Gastrocnemius medialis (tissue), 4 donors: ENCODE measurements at regions of chr5 and their contacts with region 1.

Region 1: DNA sequence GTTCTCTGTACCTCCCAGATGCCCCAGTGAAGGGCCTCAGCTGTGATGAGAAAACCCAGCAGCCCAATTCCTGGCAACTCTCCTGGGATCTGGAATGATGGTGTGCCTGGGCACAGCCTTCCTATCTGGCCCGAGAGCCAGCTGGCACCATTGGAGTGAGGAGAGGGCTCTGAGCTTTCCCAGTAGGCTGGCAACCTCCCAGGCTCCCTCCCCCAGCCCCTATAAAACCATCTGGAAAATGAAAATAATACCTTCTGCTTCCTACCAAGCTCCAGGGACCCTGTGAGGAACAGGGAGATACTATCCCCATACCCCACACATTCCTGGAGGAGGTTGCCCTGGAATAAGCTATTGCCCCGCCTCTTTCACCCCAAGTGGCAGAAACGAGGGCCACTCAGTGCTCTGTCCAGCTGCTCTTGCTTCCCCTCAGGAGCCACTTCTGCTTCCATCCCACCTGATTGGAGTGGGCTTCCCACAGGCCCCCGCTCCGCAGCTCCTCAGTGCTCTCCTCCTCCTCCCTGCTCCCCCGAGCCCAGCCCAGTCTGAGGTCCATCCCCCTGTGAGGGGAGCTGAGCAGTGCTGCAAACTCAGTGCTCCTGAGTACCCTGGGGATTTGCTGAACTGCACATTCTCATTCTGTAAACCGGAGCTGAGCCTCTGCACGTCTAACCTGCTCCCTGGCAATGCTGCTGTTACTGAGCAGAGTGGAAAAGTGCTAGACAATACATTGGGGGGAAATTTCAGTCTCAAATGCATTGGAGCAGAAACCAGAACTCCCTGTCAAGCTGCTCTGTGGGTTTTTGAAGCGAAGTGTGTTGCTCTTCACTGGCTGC is 74.7 kb downstream of the THBS4 start:
- DNase-seq: no peak
- ATAC-seq: no peak
- H3K4me3 ChIP-seq: no peak overlapping the region
- H3K27ac ChIP-seq: no peak overlapping the region
- H3K4me1 ChIP-seq: no peaks in the 10 kb centered on the region
- H3K27me3 ChIP-seq: no peaks in the 10 kb centered on the region
- CTCF ChIP-seq: no peak
- POLR2A ChIP-seq: no peak

Region 2: GRCh38 chr5:80192507-80193241 is 82.8 kb after region 1 on chr5:
- in situ Hi-C with region 1: no loop called
- intact Hi-C with region 1: no loop called
- DNase-seq: peak in 1 of 2 donors; percentile 18
- ATAC-seq: peak; percentile 80 to 82
- H3K4me3 ChIP-seq: peak overlapping the region; percentile 26 to 30 (median 28)
- H3K27ac ChIP-seq: peak overlapping the region; percentile 59 to 85 (median 77)
- H3K4me1 ChIP-seq: peaks cover 44 to 50% of the 10 kb centered on the region in 2 donors
- H3K27me3 ChIP-seq: no peaks in the 10 kb centered on the region
- CTCF ChIP-seq: no peak
- POLR2A ChIP-seq: no peak

Region 3: DNA sequence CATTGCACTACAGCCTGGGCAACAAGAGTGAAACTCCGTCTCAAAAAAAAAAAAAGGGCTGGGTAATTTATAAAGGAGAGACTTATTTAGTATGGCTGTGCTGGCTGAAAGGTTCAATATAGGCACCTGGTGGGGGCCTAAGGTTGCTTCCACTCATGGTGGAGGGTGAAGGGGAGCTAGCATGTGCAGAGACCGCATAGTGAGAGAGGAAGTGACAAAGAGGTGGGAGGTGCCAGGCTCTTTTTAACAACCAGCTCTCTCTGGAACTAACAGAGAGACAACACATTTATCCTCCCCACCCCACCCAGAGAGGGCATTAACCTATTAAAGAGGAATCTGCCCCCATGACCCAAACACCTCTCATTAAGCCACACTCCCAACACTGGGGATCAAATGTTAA is 174.9 kb after region 1 on chr5:
- in situ Hi-C with region 1: loop called in 1 of 4 experiments (anchors 10 kb)
- intact Hi-C with region 1: no loop called
- DNase-seq: no peak
- ATAC-seq: no peak
- H3K4me3 ChIP-seq: no peak overlapping the region
- H3K27ac ChIP-seq: no peak overlapping the region
- H3K4me1 ChIP-seq: no peaks in the 10 kb centered on the region
- H3K27me3 ChIP-seq: no peaks in the 10 kb centered on the region
- CTCF ChIP-seq: no peak
- POLR2A ChIP-seq: no peak